Activated T-helper 1 cell treated with anti-CD3 and anti-CD28 coated beads, Interleukin-12 subunit alpha, Interleukin-12 subunit beta, Interleukin-2, Interleukin-4 antibody, amounts not matched to agents 30 ng/mL and 10 ng/mL and 1 ng/mL, durations not matched to agents 14 hours and 24 hours and 36 hours (primary cell): ENCODE measurements at regions of chr21 and their contacts with region 1.

Region 1: GRCh38 chr21:42878993-42879787 is at the start of gene WDR4:
- DNase-seq: peak; percentile 99
- H3K4me3 Mint-ChIP-seq: peak within 1 kb of the TSS; percentile 98
- H3K27ac Mint-ChIP-seq: peak within 1 kb of the TSS; percentile 98
- H3K4me1 Mint-ChIP-seq: peaks cover 26% of the 10 kb centered on the region
- H3K27me3 Mint-ChIP-seq: no peaks in the 10 kb centered on the region
- total RNA-seq, gene WDR4: 73.2 and 74.2 TPM in 2 replicates

Region 2: DNA sequence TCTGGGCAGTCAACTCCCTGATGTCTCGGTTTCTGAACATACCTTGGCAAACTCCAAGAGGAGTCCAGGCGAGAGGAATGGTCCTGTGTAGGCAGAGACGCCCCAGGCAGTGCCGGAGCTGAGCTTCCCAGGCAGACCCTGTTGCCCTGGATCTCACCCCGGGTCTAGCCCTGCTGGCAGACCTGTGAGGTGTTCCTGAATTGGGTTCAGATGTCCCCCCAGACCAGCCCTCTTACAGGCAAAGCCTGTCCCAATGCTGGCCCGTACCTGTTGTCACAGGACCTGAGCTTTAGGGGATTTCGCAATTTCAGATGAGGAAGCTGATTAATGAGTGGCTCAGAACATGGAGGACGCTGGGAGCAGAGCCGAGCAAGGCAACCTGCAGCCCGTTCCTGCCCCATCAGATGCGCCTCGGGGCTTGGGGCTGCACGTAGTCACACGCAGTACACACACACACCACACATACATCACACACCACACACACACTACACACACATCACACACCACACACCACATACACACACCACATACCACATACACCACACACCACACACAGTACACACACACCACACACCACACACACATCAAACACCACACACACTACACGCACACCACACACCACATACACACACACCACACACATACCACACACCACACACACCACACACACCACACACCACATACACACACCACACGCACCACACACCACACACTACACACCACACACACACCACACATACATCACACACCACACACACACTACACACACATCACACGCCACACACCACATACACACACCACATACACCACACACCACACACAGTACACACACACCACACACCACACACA is 264.2 kb before region 1 on chr21:
- intact Hi-C with region 1: loop called (anchors 1 kb)
- DNase-seq: peak; percentile 48
- H3K4me3 Mint-ChIP-seq: no peak overlapping the region
- H3K27ac Mint-ChIP-seq: no peak overlapping the region
- H3K4me1 Mint-ChIP-seq: no peaks in the 10 kb centered on the region
- H3K27me3 Mint-ChIP-seq: peaks cover 18% of the 10 kb centered on the region

Region 3: DNA sequence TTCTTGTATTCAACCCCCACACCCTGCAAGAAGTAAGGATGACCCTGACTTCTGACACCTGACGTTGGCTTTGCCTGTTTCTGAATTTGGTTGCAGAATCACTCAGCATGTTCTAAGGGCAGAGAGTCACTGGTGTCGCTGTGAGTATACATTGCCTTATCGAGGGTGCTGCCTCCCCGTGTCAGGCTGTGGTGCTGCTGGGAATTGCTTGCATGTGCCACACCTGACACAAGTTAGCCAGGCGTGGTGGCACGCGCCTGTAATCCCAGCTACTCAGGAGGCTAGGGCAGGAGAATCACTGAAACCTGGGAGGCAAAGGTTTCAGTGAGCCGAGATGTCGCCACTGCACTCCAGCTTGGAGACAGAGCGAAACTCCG is 45.8 kb before region 1 on chr21:
- intact Hi-C with region 1: loop called (anchors 2 kb)
- DNase-seq: peak; percentile 40
- H3K4me3 Mint-ChIP-seq: peak overlapping the region; percentile 71
- H3K27ac Mint-ChIP-seq: peak overlapping the region; percentile 59
- H3K4me1 Mint-ChIP-seq: peaks cover 23% of the 10 kb centered on the region
- H3K27me3 Mint-ChIP-seq: peaks cover 7% of the 10 kb centered on the region

Region 4: GRCh38 chr21:42892931-42893755 is 14.0 kb after region 1 on chr21 and contains the start of gene NDUFV3:
- intact Hi-C with region 1: loop called (anchors 1 kb)
- DNase-seq: peak; percentile 99
- H3K4me3 Mint-ChIP-seq: peak within 1 kb of the TSS; percentile 89
- H3K27ac Mint-ChIP-seq: peak within 1 kb of the TSS; percentile 91
- H3K4me1 Mint-ChIP-seq: peaks cover 12% of the 10 kb centered on the region
- H3K27me3 Mint-ChIP-seq: no peaks in the 10 kb centered on the region
- total RNA-seq, gene NDUFV3: 41.9 and 44.4 TPM in 2 replicates

Region 5: GRCh38 chr21:42973991-42974831 is 95.0 kb after region 1 on chr21 and contains the start of gene PKNOX1:
- intact Hi-C with region 1: loop called (anchors 1 kb)
- DNase-seq: peak; percentile 99
- H3K4me3 Mint-ChIP-seq: peak within 1 kb of the TSS; percentile 87
- H3K27ac Mint-ChIP-seq: peak within 1 kb of the TSS; percentile 87
- H3K4me1 Mint-ChIP-seq: peaks cover 25% of the 10 kb centered on the region
- H3K27me3 Mint-ChIP-seq: no peaks in the 10 kb centered on the region
- total RNA-seq, gene PKNOX1: 25.1 and 28.8 TPM in 2 replicates